B cell (primary cell): ENCODE measurements at regions of chr7 and their contacts with region 1.

Region 1: GRCh38 chr7:25093268-25093826 is 31.7 kb downstream of the CYCS start:
- DNase-seq: peak; percentile 77
- ATAC-seq: peak; percentile 87
- H3K4me3 ChIP-seq: no peak overlapping the region
- H3K4me3 Mint-ChIP-seq: no peak overlapping the region
- H3K27ac ChIP-seq: no peak overlapping the region
- H3K27ac Mint-ChIP-seq: no peak overlapping the region
- H3K4me1 ChIP-seq: peaks cover 0 to 7% of the 10 kb centered on the region in 2 donors
- H3K4me1 Mint-ChIP-seq: peaks cover 6% of the 10 kb centered on the region
- H3K27me3 ChIP-seq: no peaks in the 10 kb centered on the region
- H3K27me3 Mint-ChIP-seq: no peaks in the 10 kb centered on the region
- CTCF ChIP-seq: peak; percentile 75

Region 2: DNA sequence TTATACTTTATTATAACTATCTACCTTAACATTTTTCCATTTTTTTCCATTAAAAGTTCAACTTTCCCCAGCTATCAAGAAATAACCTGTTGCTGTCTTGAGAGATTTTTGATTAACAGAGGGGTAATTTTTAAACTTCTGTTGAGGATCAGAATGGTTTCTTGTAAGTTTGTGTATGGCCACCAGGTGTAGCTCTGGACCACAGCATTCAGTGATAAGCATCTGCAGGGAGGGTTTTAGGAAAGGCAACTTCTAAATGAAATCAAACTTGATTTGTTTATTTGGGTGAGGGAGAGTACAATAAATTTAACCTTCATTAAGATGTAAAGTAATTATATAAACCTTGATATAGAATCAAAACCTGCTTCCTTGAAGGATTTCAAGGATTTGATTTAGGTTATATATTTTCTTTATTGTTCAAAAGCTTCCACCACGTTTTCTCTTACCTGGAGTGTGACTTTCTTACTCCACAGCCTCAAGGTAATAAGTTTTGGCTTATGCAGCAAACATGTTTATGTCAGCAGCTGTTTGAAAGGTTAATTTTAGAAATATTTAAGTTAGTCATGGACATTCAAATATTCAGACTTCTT is 1230.0 kb before region 1 on chr7:
- CTCF ChIA-PET with region 1: interaction called, 3 read pairs
- POLR2A ChIA-PET with region 1: no interaction called
- intact Hi-C with region 1: loop called (anchors 10 kb)
- DNase-seq: peak; percentile 7
- ATAC-seq: no peak
- H3K4me3 ChIP-seq: no peak overlapping the region
- H3K4me3 Mint-ChIP-seq: no peak overlapping the region
- H3K27ac ChIP-seq: no peak overlapping the region
- H3K27ac Mint-ChIP-seq: no peak overlapping the region
- H3K4me1 ChIP-seq: no peaks in the 10 kb centered on the region
- H3K4me1 Mint-ChIP-seq: no peaks in the 10 kb centered on the region
- H3K27me3 ChIP-seq: no peaks in the 10 kb centered on the region
- H3K27me3 Mint-ChIP-seq: peaks cover 6% of the 10 kb centered on the region
- CTCF ChIP-seq: peak; percentile 42

Region 3: GRCh38 chr7:24572997-24573625 is 520.2 kb before region 1 on chr7 and contains the start of gene PALS2:
- CTCF ChIA-PET with region 1: interaction called, 4 read pairs
- POLR2A ChIA-PET with region 1: no interaction called
- intact Hi-C with region 1: loop called (anchors 5 kb)
- DNase-seq: peak; percentile 90
- ATAC-seq: peak; percentile 79
- H3K4me3 ChIP-seq: peak within 1 kb of the TSS; percentile 63 to 88 (median 84)
- H3K4me3 Mint-ChIP-seq: peak within 1 kb of the TSS; percentile 91
- H3K27ac ChIP-seq: peak within 1 kb of the TSS; percentile 70 to 73
- H3K27ac Mint-ChIP-seq: peak within 1 kb of the TSS; percentile 89
- H3K4me1 ChIP-seq: peaks cover 24 to 29% of the 10 kb centered on the region in 2 donors
- H3K4me1 Mint-ChIP-seq: peaks cover 37% of the 10 kb centered on the region
- H3K27me3 ChIP-seq: peaks cover 0 to 3% (median 0%) of the 10 kb centered on the region in 4 experiments
- H3K27me3 Mint-ChIP-seq: peaks cover 5% of the 10 kb centered on the region
- CTCF ChIP-seq: no peak
- total RNA-seq, gene PALS2: 47.8 and 54.2 TPM in 2 replicates

Region 4: GRCh38 chr7:24819916-24820689 is 273.2 kb before region 1 on chr7:
- CTCF ChIA-PET with region 1: interaction called, 354 read pairs
- POLR2A ChIA-PET with region 1: interaction called, 3 read pairs
- intact Hi-C with region 1: loop called (anchors 1 kb)
- DNase-seq: peak; percentile 88
- ATAC-seq: peak; percentile 56
- H3K4me3 ChIP-seq: peak overlapping the region in 1 of 5 experiments; percentile 17
- H3K4me3 Mint-ChIP-seq: peak overlapping the region; percentile 83
- H3K27ac ChIP-seq: peak overlapping the region; percentile 76 to 83
- H3K27ac Mint-ChIP-seq: peak overlapping the region; percentile 94
- H3K4me1 ChIP-seq: peaks cover 27% of the 10 kb centered on the region in 2 donors
- H3K4me1 Mint-ChIP-seq: peaks cover 40% of the 10 kb centered on the region
- H3K27me3 ChIP-seq: no peaks in the 10 kb centered on the region
- H3K27me3 Mint-ChIP-seq: no peaks in the 10 kb centered on the region
- CTCF ChIP-seq: peak; percentile 93

Region 5: GRCh38 chr7:24939416-24939815 is 153.9 kb before region 1 on chr7:
- CTCF ChIA-PET with region 1: no interaction called
- POLR2A ChIA-PET with region 1: no interaction called
- intact Hi-C with region 1: no loop called
- DNase-seq: no peak
- ATAC-seq: no peak
- H3K4me3 ChIP-seq: no peak overlapping the region
- H3K4me3 Mint-ChIP-seq: no peak overlapping the region
- H3K27ac ChIP-seq: no peak overlapping the region
- H3K27ac Mint-ChIP-seq: no peak overlapping the region
- H3K4me1 ChIP-seq: peaks cover 4 to 6% of the 10 kb centered on the region in 2 donors
- H3K4me1 Mint-ChIP-seq: peaks cover 36% of the 10 kb centered on the region
- H3K27me3 ChIP-seq: no peaks in the 10 kb centered on the region
- H3K27me3 Mint-ChIP-seq: no peaks in the 10 kb centered on the region
- CTCF ChIP-seq: no peak

Region 6: DNA sequence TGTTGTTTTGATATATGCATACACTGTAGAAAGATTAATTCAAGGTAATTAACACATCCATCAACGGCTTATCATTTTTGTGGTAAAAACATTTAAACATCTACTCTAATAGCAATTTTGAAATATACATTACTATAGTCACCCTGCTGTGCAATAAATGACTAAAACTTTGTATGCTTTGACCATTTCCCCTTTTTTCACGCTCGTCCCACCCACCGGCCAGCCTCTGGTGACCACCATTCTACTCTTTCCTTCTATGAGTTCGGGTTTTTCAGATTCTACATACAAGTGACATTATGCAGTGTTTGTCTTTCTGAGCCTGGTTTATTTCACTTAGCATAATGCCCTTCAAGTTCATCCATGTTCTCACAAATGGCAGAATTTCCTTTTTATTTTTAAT is 10.4 kb after region 1 on chr7:
- CTCF ChIA-PET with region 1: interaction called, 26 read pairs
- POLR2A ChIA-PET with region 1: no interaction called
- intact Hi-C with region 1: no loop called
- DNase-seq: no peak
- ATAC-seq: no peak
- H3K4me3 ChIP-seq: no peak overlapping the region
- H3K4me3 Mint-ChIP-seq: no peak overlapping the region
- H3K27ac ChIP-seq: no peak overlapping the region
- H3K27ac Mint-ChIP-seq: no peak overlapping the region
- H3K4me1 ChIP-seq: no peaks in the 10 kb centered on the region
- H3K4me1 Mint-ChIP-seq: no peaks in the 10 kb centered on the region
- H3K27me3 ChIP-seq: peaks cover 0 to 6% (median 0%) of the 10 kb centered on the region in 4 experiments
- H3K27me3 Mint-ChIP-seq: peaks cover 13% of the 10 kb centered on the region
- CTCF ChIP-seq: no peak

Region 7: DNA sequence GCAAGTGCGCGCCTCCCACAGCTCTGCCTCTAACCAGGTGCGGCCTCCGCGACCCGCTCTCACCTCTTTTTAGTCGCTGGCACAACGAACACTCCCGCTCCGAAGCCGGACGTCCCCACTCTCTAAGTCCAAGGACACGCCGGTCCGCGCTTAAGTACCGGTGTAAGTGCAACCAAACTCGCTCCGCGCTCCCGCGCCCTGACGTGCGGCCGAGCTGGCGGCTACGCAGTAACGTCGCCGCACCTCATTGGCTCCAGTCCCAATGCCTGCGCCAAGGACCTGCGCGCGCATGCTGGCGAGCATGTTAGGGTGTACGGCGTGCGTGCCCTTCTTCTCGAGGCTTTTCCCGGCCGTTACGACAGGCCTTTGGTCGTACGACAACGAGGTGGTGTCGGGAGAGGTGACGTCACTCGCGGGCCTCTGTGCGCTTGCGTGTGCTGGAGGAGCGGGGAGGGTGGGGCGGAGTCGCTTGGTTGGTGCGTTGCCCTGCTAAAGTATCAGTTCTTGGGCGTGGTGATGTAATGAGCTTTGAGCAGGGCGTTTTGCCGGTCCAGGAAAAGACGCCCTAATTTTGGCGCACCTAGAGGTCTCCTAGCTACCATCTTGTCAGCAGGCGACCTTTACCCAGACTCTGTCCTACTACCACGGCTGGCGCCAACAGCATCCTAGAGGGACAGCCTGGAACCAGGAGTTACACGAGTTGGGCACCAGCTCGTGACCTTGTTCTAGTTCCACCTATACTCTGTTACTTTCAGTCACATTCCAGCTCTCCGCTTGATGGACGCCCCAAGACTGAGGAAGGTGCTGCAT is 32.0 kb after region 1 on chr7 and contains the start of gene CYCS:
- CTCF ChIA-PET with region 1: interaction called, 65 read pairs
- POLR2A ChIA-PET with region 1: interaction called, 3 read pairs
- intact Hi-C with region 1: no loop called
- DNase-seq: peak; percentile 100
- ATAC-seq: peak; percentile 91
- H3K4me3 ChIP-seq: peak within 1 kb of the TSS; percentile 57 to 94 (median 86)
- H3K4me3 Mint-ChIP-seq: peak within 1 kb of the TSS; percentile 100
- H3K27ac ChIP-seq: peak within 1 kb of the TSS; percentile 96 to 99
- H3K27ac Mint-ChIP-seq: peak within 1 kb of the TSS; percentile 99
- H3K4me1 ChIP-seq: peaks cover 13 to 15% of the 10 kb centered on the region in 2 donors
- H3K4me1 Mint-ChIP-seq: peaks cover 27% of the 10 kb centered on the region
- H3K27me3 ChIP-seq: no peaks in the 10 kb centered on the region
- H3K27me3 Mint-ChIP-seq: no peaks in the 10 kb centered on the region
- CTCF ChIP-seq: no peak
- total RNA-seq, gene CYCS: 48.8 and 51.3 TPM in 2 replicates